H1 (cell line): ENCODE measurements at regions of chr14 and their contacts with region 1.

Region 1: GRCh38 chr14:88463318-88463717 is 77.9 kb downstream of the SPATA7 start:
- DNase-seq: no peak
- H3K4me3 ChIP-seq: no peak overlapping the region
- H3K27ac ChIP-seq: no peak overlapping the region
- H3K4me1 ChIP-seq: no peaks in the 10 kb centered on the region
- H3K27me3 ChIP-seq: no peaks in the 10 kb centered on the region
- CTCF ChIP-seq: peak in 2 of 3 experiments; percentile 56; a peak in 3 of 4 replicates
- EP300 ChIP-seq: no peak
- POLR2A ChIP-seq: no peak
- RAD21 ChIP-seq: peak; percentile 17 to 41; a peak in 2 of 4 replicates

Region 2: DNA sequence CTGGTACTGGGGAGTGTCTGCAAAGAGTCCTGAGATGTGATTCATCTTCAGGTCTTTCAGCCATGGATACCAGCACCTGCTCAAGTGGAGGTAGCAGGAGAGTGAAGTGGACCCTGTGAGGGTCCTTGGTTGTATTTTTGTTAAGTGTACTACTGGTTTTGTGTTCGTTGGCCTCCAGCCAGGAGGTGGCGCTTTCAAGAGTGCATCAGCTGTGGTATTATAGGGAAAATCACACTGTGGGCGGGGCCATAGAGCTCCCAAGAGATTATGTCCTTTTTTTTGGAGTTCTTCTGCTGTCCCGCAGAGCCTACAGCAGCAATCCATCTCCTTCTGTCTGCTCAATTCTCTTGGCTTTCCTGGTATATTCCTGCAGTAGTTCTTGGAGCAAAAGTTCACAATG is 11.1 kb before region 1 on chr14:
- CTCF ChIA-PET with region 1: interaction called, 44 read pairs
- POLR2A ChIA-PET with region 1: no interaction called
- DNase-seq: peak in 1 of 2 experiments; percentile 52
- H3K4me3 ChIP-seq: no peak overlapping the region
- H3K27ac ChIP-seq: no peak overlapping the region
- H3K4me1 ChIP-seq: no peaks in the 10 kb centered on the region
- H3K27me3 ChIP-seq: no peaks in the 10 kb centered on the region
- CTCF ChIP-seq: peak; percentile 28 to 42 (median 30)
- EP300 ChIP-seq: no peak
- POLR2A ChIP-seq: no peak
- RAD21 ChIP-seq: peak in 1 of 2 experiments; percentile 22; a peak in 2 of 4 replicates

Region 3: GRCh38 chr14:88476302-88476701 is 13.0 kb after region 1 on chr14:
- CTCF ChIA-PET with region 1: interaction called, 13 read pairs
- POLR2A ChIA-PET with region 1: interaction called, 4 read pairs
- DNase-seq: no peak
- H3K4me3 ChIP-seq: no peak overlapping the region
- H3K27ac ChIP-seq: no peak overlapping the region
- H3K4me1 ChIP-seq: no peaks in the 10 kb centered on the region
- H3K27me3 ChIP-seq: no peaks in the 10 kb centered on the region
- CTCF ChIP-seq: no peak
- EP300 ChIP-seq: no peak
- POLR2A ChIP-seq: no peak
- RAD21 ChIP-seq: no peak

Region 4: DNA sequence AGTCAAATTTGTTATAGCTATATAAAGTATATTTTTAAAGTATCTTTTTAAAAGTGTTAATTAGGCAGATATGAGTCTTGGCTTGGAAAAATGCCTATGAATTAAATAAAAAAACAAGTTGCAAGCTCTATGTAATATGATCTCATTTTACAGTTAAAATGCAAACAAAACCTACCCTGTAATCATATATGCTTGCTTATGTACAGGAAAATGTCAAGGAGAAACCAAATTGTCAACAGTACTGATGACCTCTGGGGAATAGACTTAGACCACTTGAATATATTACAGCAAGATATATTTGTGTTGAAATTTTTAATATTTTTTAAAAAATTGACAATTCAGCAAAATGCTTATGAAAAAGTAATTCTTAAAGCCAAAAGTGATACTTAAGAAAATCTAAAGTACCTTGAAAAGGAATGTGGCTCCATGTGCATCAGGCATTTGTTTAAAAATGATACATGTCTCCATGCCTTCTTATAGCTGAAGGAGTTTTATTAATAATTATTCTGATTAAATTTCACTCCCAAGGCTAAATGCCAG is 42.2 kb after region 1 on chr14:
- CTCF ChIA-PET with region 1: no interaction called
- POLR2A ChIA-PET with region 1: no interaction called
- DNase-seq: no peak
- H3K4me3 ChIP-seq: no peak overlapping the region
- H3K27ac ChIP-seq: no peak overlapping the region
- H3K4me1 ChIP-seq: no peaks in the 10 kb centered on the region
- H3K27me3 ChIP-seq: no peaks in the 10 kb centered on the region
- CTCF ChIP-seq: no peak
- EP300 ChIP-seq: no peak
- POLR2A ChIP-seq: no peak
- RAD21 ChIP-seq: no peak